Activated CD8-positive, alpha-beta memory T cell treated with anti-CD3 and anti-CD28 coated beads, Interleukin-2, amount 10 ng/mL, durations not matched to agents 7 days and 5 days (primary cell): ENCODE measurements at regions of chr2 and their contacts with region 1.

Region 1: DNA sequence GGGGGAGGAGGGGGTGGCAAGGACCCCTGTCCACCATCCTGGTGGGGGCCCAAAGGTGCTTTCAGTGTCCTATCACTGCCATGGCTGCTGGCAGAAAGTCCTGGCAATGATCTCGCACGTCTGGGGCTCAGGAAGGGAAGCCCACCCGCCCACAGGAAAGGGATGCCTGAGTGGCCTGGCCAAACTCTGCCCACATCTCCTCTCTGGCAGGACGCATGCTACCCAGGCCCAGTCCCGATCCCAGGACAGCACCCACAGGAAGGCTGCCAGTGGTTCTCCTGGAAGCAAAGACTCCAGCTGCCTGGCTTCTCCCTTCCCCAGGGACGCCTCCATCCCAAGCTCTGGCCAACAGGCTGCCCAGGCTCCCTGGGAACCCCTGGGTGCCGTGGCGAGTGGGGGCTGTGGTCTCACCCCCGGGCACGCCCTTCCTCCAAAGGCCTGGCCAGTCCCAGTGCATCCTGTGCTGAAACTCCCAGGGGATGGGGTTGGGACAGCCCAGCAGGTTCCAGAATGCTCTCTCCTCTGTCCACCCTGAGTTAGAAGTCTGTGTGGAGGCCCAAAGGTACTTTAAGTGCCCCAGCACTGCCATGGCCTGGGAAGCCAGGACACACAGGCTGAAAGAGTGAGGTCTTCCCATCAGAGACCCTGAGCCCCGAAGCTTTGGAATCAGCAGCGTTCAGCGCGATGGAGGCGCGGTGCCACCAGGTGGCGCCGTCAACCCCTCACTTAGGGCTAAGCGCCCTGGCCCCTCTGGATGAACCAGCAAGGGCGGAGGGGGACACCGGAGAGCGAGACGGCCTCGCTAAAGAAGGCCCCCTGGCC is 29.8 kb upstream of the TAF1B start:
- DNase-seq: peak; percentile 82
- ATAC-seq: peak; percentile 97
- H3K4me3 Mint-ChIP-seq: no peak overlapping the region
- H3K27ac Mint-ChIP-seq: peak overlapping the region; percentile 71
- H3K4me1 Mint-ChIP-seq: peaks cover 20% of the 10 kb centered on the region
- H3K27me3 Mint-ChIP-seq: peaks cover 7% of the 10 kb centered on the region

Region 2: DNA sequence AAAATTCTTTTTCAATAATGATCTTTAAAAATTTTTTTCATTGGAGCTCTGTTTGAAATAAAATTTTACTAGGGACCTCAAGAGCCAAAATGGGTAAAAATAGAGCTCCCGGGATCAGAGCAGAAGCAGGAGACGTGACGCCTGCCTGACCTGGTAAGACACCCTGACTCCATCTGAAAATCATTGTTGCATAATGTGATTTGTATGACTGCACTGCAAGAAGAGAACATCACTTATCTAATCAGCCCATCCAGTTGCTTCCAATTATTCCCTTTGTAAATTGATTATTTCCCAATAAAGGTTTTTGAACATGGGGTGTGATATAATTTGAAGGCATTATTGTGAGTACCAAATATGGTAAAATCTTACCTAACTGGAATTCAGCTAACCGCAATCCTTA is 12.7 kb after region 1 on chr2:
- CTCF ChIA-PET with region 1: interaction called, 16 read pairs
- DNase-seq: no peak
- ATAC-seq: no peak
- H3K4me3 Mint-ChIP-seq: no peak overlapping the region
- H3K27ac Mint-ChIP-seq: no peak overlapping the region
- H3K4me1 Mint-ChIP-seq: peaks cover 13% of the 10 kb centered on the region
- H3K27me3 Mint-ChIP-seq: peaks cover 11% of the 10 kb centered on the region

Region 3: DNA sequence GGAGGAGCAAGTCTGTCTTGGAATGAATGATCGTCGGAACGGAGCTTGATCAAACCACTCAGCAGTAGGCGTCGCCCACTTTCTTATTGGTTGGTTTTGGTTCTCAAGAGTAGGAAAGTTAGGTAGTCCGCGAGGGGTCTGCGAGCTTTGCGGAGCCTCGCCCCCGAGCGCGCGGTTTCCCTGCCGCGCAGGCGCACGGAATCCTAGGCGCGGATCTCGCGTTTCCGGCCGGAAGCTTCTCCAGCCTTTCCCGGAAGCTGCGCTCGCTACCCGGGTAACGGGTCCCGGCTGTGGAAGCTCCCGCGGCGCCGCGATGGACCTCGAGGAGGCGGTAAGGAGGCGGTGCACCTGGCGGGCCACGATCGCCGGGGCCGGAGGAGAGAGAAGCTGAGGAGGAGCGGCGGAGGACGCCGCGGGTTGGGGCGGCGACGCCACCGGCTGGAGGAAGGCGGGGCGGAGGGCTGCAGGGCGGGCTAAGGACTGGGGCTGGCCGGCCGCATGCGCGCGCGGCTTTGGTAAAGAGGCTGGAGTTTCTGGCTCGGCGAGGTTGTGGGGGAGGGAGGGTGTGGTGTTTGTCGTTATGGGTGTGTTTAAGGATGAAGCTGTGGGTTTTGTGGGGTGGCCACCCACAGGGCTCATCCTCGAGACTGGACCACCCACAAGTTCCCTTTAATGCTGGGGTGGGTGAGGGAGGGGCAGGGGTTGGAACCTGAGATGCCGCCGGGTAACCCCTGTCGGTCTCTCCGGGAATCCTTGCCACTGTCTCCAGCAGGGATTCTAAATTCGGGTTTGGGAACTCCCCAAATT is 29.9 kb after region 1 on chr2 and contains the start of gene TAF1B:
- CTCF ChIA-PET with region 1: interaction called, 21 read pairs
- DNase-seq: peak; percentile 94
- ATAC-seq: peak; percentile 89
- H3K4me3 Mint-ChIP-seq: peak within 1 kb of the TSS; percentile 91
- H3K27ac Mint-ChIP-seq: peak within 1 kb of the TSS; percentile 86
- H3K4me1 Mint-ChIP-seq: peaks cover 43% of the 10 kb centered on the region
- H3K27me3 Mint-ChIP-seq: peaks cover 2% of the 10 kb centered on the region
- total RNA-seq, gene TAF1B: 29.5 to 31.2 TPM

Region 4: DNA sequence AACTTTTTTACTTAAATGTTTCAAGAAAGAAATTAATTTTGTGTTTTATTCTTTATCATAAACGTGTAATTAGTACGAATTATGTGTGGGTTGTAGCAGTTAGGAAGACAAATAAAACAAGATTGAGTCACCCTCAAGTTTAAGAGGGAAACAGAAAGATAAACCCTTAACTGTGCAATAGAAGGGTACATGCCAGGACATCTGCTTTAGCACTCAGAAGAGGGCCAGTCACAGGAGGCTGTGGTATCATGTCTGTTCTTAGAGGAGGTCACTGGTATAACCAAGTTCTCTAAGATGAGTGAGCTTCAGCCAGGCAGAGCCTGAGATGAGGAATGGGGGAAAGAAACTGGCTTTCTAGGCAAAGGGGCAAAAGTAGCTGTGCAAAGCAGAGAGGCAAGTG is 95.6 kb after region 1 on chr2:
- CTCF ChIA-PET with region 1: interaction called, 22 read pairs
- DNase-seq: no peak
- ATAC-seq: no peak
- H3K4me3 Mint-ChIP-seq: no peak overlapping the region
- H3K27ac Mint-ChIP-seq: no peak overlapping the region
- H3K4me1 Mint-ChIP-seq: peaks cover 2% of the 10 kb centered on the region
- H3K27me3 Mint-ChIP-seq: no peaks in the 10 kb centered on the region

Region 5: GRCh38 chr2:9961013-9961412 is 147.5 kb after region 1 on chr2:
- CTCF ChIA-PET with region 1: interaction called, 10 read pairs
- DNase-seq: no peak
- ATAC-seq: no peak
- H3K4me3 Mint-ChIP-seq: no peak overlapping the region
- H3K27ac Mint-ChIP-seq: no peak overlapping the region
- H3K4me1 Mint-ChIP-seq: peaks cover 15% of the 10 kb centered on the region
- H3K27me3 Mint-ChIP-seq: peaks cover 23% of the 10 kb centered on the region

Region 6: DNA sequence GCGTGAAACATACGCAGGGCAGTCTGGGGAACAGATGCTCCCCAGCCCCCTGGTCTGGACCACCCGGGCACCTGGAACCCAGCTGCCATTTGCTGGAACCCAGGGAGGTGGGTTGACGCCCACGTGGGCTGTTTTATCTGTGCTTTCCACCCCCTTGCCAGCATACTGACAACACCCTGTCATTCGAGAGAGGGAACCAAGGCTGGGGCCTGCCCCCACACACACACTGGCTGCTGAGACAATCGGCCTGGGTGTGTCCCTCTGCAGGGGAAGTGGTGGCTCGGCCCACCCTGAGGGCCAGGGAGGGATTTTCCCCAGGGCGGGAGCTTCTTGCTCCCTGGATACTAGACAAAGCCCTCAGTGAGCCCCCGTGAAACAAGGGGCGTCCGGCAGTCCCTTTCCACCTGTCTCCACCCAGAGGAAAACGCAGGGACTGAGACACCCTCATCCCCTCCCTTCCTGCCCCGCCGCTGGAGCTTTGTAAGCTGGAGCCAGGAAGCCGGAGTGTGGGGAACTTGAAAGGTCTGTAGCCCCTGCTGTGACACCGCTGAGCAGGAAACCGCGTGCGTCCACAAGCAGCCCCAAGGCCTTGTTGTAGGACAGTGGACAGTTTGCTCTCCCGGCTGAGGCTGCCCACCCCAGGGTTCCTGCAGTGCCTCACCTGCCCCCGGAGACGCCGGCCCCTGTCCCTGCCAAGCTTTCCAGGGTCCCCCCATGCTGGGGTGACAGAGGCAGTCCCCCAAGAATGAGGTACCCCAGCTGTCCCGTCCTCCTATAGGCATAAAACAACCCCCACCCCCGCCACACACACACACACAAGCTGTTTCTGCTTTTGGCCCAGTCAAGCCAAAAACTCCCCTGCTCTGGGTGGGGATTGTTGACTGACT is 215.7 kb after region 1 on chr2:
- CTCF ChIA-PET with region 1: interaction called, 13 read pairs
- DNase-seq: peak; percentile 83
- ATAC-seq: peak; percentile 93
- H3K4me3 Mint-ChIP-seq: peak overlapping the region; percentile 53
- H3K27ac Mint-ChIP-seq: peak overlapping the region; percentile 84
- H3K4me1 Mint-ChIP-seq: peaks cover 22% of the 10 kb centered on the region
- H3K27me3 Mint-ChIP-seq: no peaks in the 10 kb centered on the region

Region 7: DNA sequence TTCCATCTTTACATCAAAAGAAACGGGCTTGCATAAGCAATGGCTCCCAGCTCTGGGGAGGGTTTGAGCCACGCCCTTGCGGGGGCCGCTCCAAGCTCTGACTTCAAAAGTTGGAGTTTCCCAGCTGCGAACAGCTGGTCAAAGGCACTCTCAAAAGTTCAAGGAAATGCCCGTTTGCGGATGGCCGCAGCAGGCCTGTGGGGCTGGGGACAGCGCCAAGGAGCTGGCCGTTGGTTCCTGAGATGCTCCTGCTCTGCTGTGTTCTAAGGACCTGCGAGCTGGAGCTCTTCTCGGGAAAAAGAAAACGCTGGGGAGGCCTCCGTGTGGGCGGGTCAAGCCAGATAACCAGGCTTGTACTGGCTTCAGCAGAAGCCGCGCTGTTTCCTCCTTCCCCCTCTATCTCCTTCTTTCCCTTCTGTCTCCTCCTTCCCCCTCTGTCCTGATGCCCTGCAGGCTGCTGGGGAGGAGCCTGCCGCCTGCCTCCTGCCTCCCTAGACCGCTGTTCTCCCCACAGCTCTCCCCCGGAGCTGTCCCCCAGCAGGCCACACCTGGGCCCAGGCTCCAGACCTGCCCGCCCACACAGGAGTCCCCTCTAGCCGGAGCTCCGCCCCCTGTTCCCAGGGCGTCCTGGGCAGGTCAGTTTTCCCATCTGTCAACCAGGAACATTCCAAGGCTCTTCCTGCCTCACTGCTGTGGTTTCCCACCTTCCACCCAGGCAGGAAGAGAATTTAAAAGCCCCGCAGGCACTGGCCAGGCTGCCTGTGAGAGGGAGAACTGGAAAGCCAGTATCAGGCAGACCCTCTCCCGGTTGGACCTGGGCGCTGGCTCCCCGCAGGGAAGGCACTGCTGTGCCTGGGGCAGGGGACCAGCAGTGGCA is 243.9 kb after region 1 on chr2:
- CTCF ChIA-PET with region 1: interaction called, 10 read pairs
- DNase-seq: no peak
- ATAC-seq: no peak
- H3K4me3 Mint-ChIP-seq: no peak overlapping the region
- H3K27ac Mint-ChIP-seq: no peak overlapping the region
- H3K4me1 Mint-ChIP-seq: peaks cover 4% of the 10 kb centered on the region
- H3K27me3 Mint-ChIP-seq: no peaks in the 10 kb centered on the region